Activated CD4-positive, alpha-beta T cell treated with anti-CD3 and anti-CD28 coated beads for 36 hours (primary cell): ENCODE measurements at regions of chr2 and their contacts with region 1.

Region 1: DNA sequence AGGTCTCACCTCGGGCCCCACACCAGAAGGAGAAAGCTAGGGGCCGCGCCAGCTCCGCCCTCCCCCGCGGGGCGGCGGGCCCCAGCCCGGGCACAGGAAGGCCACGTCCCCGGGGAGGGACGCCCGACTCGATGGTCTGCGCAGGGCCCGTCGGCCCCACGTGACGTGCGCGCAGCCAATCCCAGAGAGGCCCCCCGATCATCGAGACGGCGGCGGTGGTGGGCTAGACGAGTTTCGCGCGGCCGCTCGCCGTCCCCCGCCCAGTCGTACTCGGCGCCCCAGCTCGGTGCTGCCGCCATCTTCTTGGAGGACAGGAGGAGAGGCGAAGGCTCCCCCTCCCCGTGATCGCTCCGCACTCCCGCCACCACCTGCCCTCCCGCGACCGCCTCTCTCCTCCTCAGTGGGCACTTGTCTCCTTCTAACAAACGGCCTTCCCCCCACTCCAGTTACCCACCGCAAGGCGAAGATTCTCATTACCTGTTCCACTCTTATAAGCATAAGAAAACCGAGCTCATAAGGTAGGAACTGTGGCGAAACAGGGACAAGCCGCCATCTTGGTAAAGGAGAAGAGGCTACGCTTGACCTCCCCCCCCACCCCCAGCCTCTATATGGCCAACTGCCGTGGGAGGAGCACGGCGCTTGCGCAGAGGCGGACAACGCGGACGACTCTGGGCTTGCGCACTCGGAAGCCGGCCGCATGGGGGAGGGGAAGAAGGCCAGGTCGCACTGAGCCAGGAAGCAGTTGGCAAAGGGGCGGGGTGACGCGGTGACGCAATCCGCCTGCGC is at the start of gene HDLBP:
- DNase-seq: peak; percentile 100
- ATAC-seq: peak; percentile 84
- H3K4me3 Mint-ChIP-seq: peak within 1 kb of the TSS; percentile 100
- H3K27ac Mint-ChIP-seq: peak within 1 kb of the TSS; percentile 100
- H3K4me1 Mint-ChIP-seq: peaks cover 70% of the 10 kb centered on the region
- H3K27me3 Mint-ChIP-seq: no peaks in the 10 kb centered on the region
- total RNA-seq, gene HDLBP: 259 to 348 TPM

Region 2: GRCh38 chr2:239401067-239401880 is 1914.0 kb before region 1 on chr2:
- CTCF ChIA-PET with region 1: no interaction called
- POLR2A ChIA-PET with region 1: no interaction called
- intact Hi-C with region 1: loop called in 1 of 2 experiments (anchors 10 kb)
- DNase-seq: peak; percentile 99
- ATAC-seq: peak; percentile 93
- H3K4me3 Mint-ChIP-seq: peak overlapping the region; percentile 88
- H3K27ac Mint-ChIP-seq: peak overlapping the region; percentile 97
- H3K4me1 Mint-ChIP-seq: peaks cover 41% of the 10 kb centered on the region
- H3K27me3 Mint-ChIP-seq: peaks cover 2% of the 10 kb centered on the region

Region 3: DNA sequence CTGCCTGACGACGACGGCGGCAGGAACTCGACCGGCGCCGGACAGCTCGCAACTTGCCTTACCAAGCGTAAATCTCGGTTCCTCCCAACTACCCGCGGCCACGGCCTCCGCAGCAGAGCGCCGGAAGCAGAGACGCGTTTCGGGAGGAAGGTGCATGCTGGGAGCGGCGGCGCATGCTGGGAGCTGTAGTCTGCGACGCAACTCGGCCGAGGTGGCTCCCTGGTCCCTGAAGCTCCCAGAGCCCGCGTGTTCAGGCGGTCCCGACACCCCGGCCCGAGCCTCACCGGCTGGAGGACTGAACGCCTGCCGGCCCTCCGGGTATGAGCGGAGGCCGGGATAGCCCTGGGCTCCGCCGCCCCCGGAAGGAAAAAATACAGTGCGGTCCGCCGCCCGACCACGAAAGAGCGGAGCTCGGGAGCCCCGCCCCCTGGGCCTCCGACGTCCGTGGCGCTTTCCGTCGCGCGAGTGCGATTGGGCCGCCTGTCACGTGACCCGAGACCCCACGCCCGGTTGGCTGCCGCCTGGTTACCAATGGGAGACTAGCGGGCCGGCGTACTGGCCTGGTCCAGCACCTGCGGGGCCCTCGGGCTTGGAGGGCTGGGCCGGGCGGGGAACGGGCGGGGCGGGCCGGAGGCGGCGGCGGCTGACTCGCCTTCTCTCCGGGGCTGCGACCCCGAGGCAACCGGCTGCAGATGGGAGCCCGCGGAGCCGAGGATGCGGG is 728.9 kb before region 1 on chr2 and contains the start of gene CAPN10:
- CTCF ChIA-PET with region 1: no interaction called
- POLR2A ChIA-PET with region 1: no interaction called
- intact Hi-C with region 1: loop called in 1 of 2 experiments (anchors 1 kb)
- DNase-seq: peak; percentile 98
- ATAC-seq: peak; percentile 91
- H3K4me3 Mint-ChIP-seq: peak within 1 kb of the TSS; percentile 87
- H3K27ac Mint-ChIP-seq: peak within 1 kb of the TSS; percentile 85
- H3K4me1 Mint-ChIP-seq: peaks cover 38% of the 10 kb centered on the region
- H3K27me3 Mint-ChIP-seq: no peaks in the 10 kb centered on the region
- total RNA-seq, gene CAPN10: 22.1 to 30.2 TPM

Region 4: GRCh38 chr2:241217320-241218031 is 97.8 kb before region 1 on chr2:
- CTCF ChIA-PET with region 1: interaction called, 4 read pairs
- POLR2A ChIA-PET with region 1: no interaction called
- intact Hi-C with region 1: loop called in 1 of 2 experiments (anchors 1 kb)
- DNase-seq: peak; percentile 60
- ATAC-seq: peak; percentile 37
- H3K4me3 Mint-ChIP-seq: peak overlapping the region; percentile 56
- H3K27ac Mint-ChIP-seq: no peak overlapping the region
- H3K4me1 Mint-ChIP-seq: peaks cover 9% of the 10 kb centered on the region
- H3K27me3 Mint-ChIP-seq: peaks cover 2% of the 10 kb centered on the region

Region 5: GRCh38 chr2:241443486-241444223 is 128.4 kb after region 1 on chr2:
- CTCF ChIA-PET with region 1: no interaction called
- POLR2A ChIA-PET with region 1: interaction called, 4 read pairs
- intact Hi-C with region 1: loop called in 1 of 2 experiments (anchors 1 kb)
- DNase-seq: peak; percentile 95
- ATAC-seq: peak; percentile 86
- H3K4me3 Mint-ChIP-seq: peak overlapping the region; percentile 48
- H3K27ac Mint-ChIP-seq: peak overlapping the region; percentile 45
- H3K4me1 Mint-ChIP-seq: peaks cover 27% of the 10 kb centered on the region
- H3K27me3 Mint-ChIP-seq: peaks cover 37% of the 10 kb centered on the region

Region 6: DNA sequence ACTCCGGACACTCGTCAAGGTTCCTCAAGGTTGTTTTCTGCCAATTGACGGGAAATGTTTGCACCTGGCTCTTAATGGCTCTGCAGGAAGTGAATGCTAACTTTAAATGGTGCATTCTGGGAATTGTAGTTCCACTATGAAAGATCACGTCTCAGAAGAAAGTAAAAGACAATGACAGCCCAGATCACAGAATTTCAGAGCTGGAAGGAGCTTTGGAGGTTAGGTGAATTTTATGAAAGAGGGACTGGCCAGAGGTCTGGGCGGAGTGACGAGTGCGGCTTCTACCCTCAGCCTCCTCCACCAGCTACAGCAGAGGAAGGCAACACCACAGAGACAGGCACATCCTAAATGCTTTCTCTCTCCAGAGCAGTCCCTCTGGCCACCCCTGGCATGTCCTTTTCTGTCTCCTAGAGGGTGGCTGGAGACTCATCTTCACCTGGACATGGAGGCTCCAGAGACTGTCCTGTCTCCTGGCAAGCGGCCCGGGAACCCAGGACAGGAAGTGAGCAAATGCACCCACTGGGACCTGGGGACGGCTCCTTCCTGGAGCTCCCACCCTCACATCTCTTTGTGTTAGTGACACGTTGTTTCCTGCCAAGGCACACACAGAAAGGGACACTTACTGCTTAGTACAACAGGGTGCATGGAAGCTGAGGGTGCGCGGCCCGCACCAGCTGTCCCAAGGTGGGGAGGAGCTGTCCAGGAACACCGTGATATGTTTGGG is 302.3 kb after region 1 on chr2:
- CTCF ChIA-PET with region 1: no interaction called
- POLR2A ChIA-PET with region 1: no interaction called
- intact Hi-C with region 1: loop called in 1 of 2 experiments (anchors 1 kb)
- DNase-seq: peak; percentile 58
- ATAC-seq: peak; percentile 38
- H3K4me3 Mint-ChIP-seq: peak overlapping the region; percentile 66
- H3K27ac Mint-ChIP-seq: peak overlapping the region; percentile 98
- H3K4me1 Mint-ChIP-seq: peaks cover 51% of the 10 kb centered on the region
- H3K27me3 Mint-ChIP-seq: no peaks in the 10 kb centered on the region

Region 7: GRCh38 chr2:241734467-241735208 is 419.4 kb after region 1 on chr2 and contains the start of gene D2HGDH:
- CTCF ChIA-PET with region 1: no interaction called
- POLR2A ChIA-PET with region 1: no interaction called
- intact Hi-C with region 1: loop called in 1 of 2 experiments (anchors 1 kb)
- DNase-seq: peak; percentile 98
- ATAC-seq: peak; percentile 92
- H3K4me3 Mint-ChIP-seq: peak within 1 kb of the TSS; percentile 79
- H3K27ac Mint-ChIP-seq: peak within 1 kb of the TSS; percentile 70
- H3K4me1 Mint-ChIP-seq: peaks cover 57% of the 10 kb centered on the region
- H3K27me3 Mint-ChIP-seq: no peaks in the 10 kb centered on the region
- total RNA-seq, gene D2HGDH: 18.2 to 34.1 TPM